HepG2 (cell line): ENCODE measurements at regions of chr16 and their contacts with region 1.

Region 1: DNA sequence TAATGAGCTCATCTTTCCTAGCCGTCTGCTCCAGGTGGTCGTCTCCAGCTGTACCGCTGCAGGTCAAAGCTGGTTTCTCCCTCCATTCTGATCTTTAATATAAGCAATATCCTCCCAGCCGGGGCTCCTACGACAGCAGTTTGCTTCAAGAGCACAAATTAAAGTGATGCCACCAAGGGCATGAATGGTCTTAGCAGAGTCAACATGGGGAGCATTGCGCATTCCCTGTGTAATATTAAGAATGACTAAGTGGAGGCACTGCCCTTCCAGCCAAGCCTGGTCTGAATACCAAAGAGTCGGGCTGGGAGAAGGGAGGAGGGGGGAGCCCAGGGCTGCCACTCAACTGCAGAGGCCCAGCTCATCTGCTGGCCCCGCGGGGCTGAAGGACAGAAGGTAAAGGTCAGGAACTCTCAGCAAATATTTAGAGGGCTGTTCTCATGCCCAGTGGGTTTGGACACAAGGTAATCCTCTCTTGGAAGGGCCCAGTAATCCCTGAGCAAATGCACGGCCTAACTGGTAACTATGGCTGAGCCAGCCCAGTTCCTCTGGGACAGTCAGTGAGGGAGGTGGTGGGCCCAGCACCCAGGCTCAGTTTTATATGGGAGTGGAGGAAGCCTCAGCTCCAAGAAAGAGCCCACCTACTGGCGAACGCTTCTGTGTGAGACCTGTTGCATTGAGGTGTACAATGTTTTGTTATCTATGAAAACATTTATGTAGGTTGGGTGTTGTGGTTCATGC is 121.2 kb downstream of the IRX3 start:
- DNase-seq: peak; percentile 99
- ATAC-seq: peak; percentile 93
- H3K4me3 ChIP-seq: peak overlapping the region in 2 of 3 experiments; percentile 5 to 49; a peak in 2 of 6 replicates
- H3K27ac ChIP-seq: peak overlapping the region; percentile 88
- H3K4me1 ChIP-seq: peaks cover 77% of the 10 kb centered on the region
- H3K27me3 ChIP-seq: no peaks in the 10 kb centered on the region
- CTCF ChIP-seq: peak; percentile 36; the same call in 1 of the 2 replicates
- EP300 ChIP-seq: peak; percentile 80 to 96
- POLR2A ChIP-seq: peak in 1 of 2 experiments; percentile 79; a peak in 2 of 4 replicates
- RAD21 ChIP-seq: peak; percentile 72

Region 2: DNA sequence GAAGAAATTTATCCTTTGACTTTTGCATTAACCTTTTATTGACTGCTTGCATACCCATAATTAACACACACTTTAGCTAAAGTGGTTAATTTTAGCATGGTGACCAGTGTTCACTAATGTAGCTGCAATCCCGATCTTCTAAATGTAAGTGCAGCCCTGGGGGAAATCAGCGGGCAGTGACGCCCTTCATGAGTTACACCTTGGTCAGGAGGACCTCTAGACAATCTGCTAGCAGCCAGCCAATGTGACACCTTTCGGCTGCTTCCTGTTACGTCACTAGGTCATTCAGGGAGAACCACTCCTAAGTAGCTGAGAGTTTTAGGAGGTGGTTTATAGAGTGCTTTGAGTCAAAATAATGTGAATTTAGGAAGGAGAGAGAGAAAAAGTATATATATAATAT is 59.3 kb before region 1 on chr16:
- CTCF ChIA-PET with region 1: no interaction called
- POLR2A ChIA-PET with region 1: no interaction called
- in situ Hi-C with region 1: no loop called
- intact Hi-C with region 1: no loop called
- DNase-seq: peak; percentile 23
- ATAC-seq: no peak
- H3K4me3 ChIP-seq: no peak overlapping the region
- H3K27ac ChIP-seq: no peak overlapping the region
- H3K4me1 ChIP-seq: peaks cover 56% of the 10 kb centered on the region
- H3K27me3 ChIP-seq: no peaks in the 10 kb centered on the region
- CTCF ChIP-seq: no peak
- EP300 ChIP-seq: no peak
- POLR2A ChIP-seq: no peak
- RAD21 ChIP-seq: no peak

Region 3: GRCh38 chr16:54140057-54140787 is 25.1 kb before region 1 on chr16:
- CTCF ChIA-PET with region 1: no interaction called
- POLR2A ChIA-PET with region 1: interaction called, 10 read pairs
- in situ Hi-C with region 1: no loop called
- intact Hi-C with region 1: no loop called
- DNase-seq: peak; percentile 53
- ATAC-seq: peak; percentile 76
- H3K4me3 ChIP-seq: no peak overlapping the region
- H3K27ac ChIP-seq: no peak overlapping the region
- H3K4me1 ChIP-seq: peaks cover 56% of the 10 kb centered on the region
- H3K27me3 ChIP-seq: no peaks in the 10 kb centered on the region
- CTCF ChIP-seq: no peak
- EP300 ChIP-seq: peak in 1 of 2 experiments; percentile 51; a peak in 2 of 4 replicates
- POLR2A ChIP-seq: no peak
- RAD21 ChIP-seq: no peak

Region 4: GRCh38 chr16:54178478-54178976 is 13.2 kb after region 1 on chr16:
- CTCF ChIA-PET with region 1: no interaction called
- POLR2A ChIA-PET with region 1: interaction called, 155 read pairs
- in situ Hi-C with region 1: no loop called
- intact Hi-C with region 1: loop called (anchors 1 kb)
- DNase-seq: no peak
- ATAC-seq: no peak
- H3K4me3 ChIP-seq: no peak overlapping the region
- H3K27ac ChIP-seq: peak overlapping the region; percentile 97
- H3K4me1 ChIP-seq: peaks cover 98% of the 10 kb centered on the region
- H3K27me3 ChIP-seq: no peaks in the 10 kb centered on the region
- CTCF ChIP-seq: no peak
- EP300 ChIP-seq: no peak
- POLR2A ChIP-seq: no peak
- RAD21 ChIP-seq: no peak